ENCODE measurements at regions of chr2 and their contacts with region 1.

Region 1: DNA sequence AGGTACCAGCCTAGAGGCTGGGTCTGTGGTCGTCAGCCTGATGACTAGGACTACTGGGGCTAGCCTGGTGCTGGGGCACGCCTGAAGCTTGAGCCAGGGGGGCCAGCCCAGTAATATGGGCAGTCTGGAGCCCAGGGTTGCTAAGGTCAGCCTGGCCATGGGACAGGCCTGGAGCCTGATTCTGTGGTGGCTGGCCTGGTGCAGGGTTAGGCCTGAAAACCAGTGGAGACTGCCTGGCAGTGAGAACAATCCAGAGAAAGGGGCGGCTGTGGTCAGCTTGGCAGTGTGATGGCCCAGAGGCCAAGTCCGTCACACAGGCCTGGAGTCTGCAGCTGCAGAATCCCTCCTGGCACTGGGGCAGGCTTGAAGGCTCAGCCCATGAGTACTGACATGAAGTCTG is 445.8 kb downstream of the SATB2 start:
- DNase-seq: no peak
- ATAC-seq: no peak
- H3K4me3 ChIP-seq: no peak overlapping the region
- H3K4me3 Mint-ChIP-seq: no peak overlapping the region
- H3K27ac ChIP-seq: no peak overlapping the region
- H3K27ac Mint-ChIP-seq: no peak overlapping the region
- H3K4me1 ChIP-seq: no peaks in the 10 kb centered on the region
- H3K4me1 Mint-ChIP-seq: no peaks in the 10 kb centered on the region
- H3K27me3 ChIP-seq: no peaks in the 10 kb centered on the region
- H3K27me3 Mint-ChIP-seq: no peaks in the 10 kb centered on the region
- CTCF ChIP-seq: no peak

Region 2: GRCh38 chr2:198762441-198762840 is 249.5 kb before region 1 on chr2:
- CTCF ChIA-PET with region 1: no interaction called
- POLR2A ChIA-PET with region 1: no interaction called
- intact Hi-C with region 1: no loop called
- DNase-seq: no peak
- ATAC-seq: no peak
- H3K4me3 ChIP-seq: no peak overlapping the region
- H3K4me3 Mint-ChIP-seq: no peak overlapping the region
- H3K27ac ChIP-seq: no peak overlapping the region
- H3K27ac Mint-ChIP-seq: no peak overlapping the region
- H3K4me1 ChIP-seq: no peaks in the 10 kb centered on the region
- H3K4me1 Mint-ChIP-seq: no peaks in the 10 kb centered on the region
- H3K27me3 ChIP-seq: no peaks in the 10 kb centered on the region
- H3K27me3 Mint-ChIP-seq: no peaks in the 10 kb centered on the region
- CTCF ChIP-seq: no peak

Region 3: DNA sequence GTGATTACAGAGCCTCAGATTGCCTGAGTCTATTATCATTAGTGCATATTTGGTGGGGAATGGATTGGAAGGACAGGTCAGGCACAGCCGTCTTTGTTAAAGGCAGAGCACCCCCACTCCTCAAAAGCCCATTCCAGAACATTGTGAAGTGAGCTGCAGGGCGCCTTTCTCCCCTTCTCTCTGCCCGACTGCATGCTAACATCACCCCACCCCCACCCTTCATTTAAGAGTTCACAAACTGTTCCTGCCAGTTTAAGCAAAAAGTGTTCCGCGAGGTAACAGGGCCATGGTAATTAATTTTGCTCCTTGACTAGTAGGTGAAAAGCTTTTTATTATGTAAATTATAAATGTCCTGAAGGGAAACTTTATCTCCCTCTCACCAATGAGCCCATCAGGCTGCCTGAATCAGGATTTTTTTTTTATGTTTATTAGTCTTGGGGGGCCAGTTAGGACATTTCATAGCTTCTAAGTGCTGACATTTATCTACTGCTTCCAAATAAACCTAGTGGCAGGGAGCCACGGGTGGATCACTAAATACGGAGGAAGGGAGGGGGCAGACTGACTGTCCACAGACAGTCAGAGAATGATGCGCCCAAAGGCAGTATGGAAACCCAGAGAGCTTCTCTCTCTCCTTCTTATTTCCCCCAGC is 739.7 kb after region 1 on chr2:
- CTCF ChIA-PET with region 1: no interaction called
- POLR2A ChIA-PET with region 1: no interaction called
- intact Hi-C with region 1: loop called in 1 of 2 experiments (anchors 5 kb)
- DNase-seq: no peak
- ATAC-seq: no peak
- H3K4me3 ChIP-seq: no peak overlapping the region
- H3K4me3 Mint-ChIP-seq: no peak overlapping the region
- H3K27ac ChIP-seq: no peak overlapping the region
- H3K27ac Mint-ChIP-seq: no peak overlapping the region
- H3K4me1 ChIP-seq: no peaks in the 10 kb centered on the region
- H3K4me1 Mint-ChIP-seq: no peaks in the 10 kb centered on the region
- H3K27me3 ChIP-seq: no peaks in the 10 kb centered on the region
- H3K27me3 Mint-ChIP-seq: peaks cover 18% of the 10 kb centered on the region
- CTCF ChIP-seq: no peak